ENCODE measurements at regions of chr3 and their contacts with region 1.

Region 1: GRCh38 chr3:11719406-11720230 is 75.9 kb upstream of the VGLL4 start:
- DNase-seq: peak; percentile 96
- H3K4me3 ChIP-seq: peak overlapping the region; percentile 96
- H3K27ac ChIP-seq: peak overlapping the region; percentile 94
- H3K4me1 ChIP-seq: no peaks in the 10 kb centered on the region
- H3K27me3 ChIP-seq: no peaks in the 10 kb centered on the region
- CTCF ChIP-seq: no peak

Region 2: DNA sequence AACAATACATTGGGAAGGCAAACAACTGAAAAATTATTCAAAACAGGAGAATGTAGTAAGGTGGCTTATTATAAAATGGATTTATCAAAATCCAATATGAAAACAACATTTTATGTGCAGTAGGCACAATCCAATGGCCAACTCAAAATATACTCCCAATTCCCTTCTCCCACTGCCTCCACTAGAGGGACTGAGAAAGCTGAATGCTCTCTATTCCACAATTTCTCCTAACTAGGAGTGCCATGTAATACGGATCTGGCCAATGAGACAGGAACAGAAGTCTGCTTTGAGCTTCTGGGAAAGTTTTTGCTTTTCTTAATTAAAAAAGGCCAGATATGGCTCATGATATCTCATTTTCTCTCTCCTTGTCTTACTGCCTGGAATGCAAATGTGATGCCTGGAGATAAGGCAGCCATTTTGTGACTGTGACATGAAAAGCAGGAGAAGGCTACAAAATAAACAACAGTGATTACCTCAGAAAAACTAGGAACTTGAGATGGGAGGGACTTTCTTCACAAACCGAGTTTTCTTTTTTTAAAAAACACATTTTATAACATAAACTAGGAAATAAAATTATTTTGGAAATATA is 57.1 kb before region 1 on chr3:
- intact Hi-C with region 1: loop called (anchors 10 kb)
- DNase-seq: no peak
- H3K4me3 ChIP-seq: no peak overlapping the region
- H3K27ac ChIP-seq: no peak overlapping the region
- H3K4me1 ChIP-seq: peaks cover 4% of the 10 kb centered on the region
- H3K27me3 ChIP-seq: no peaks in the 10 kb centered on the region
- CTCF ChIP-seq: no peak

Measured in colonic mucosa (tissue), 4 donors.